Left cardiac atrium (tissue), 4 donors: ENCODE measurements at regions of chr17 and their contacts with region 1.

Region 1: GRCh38 chr17:63370696-63371095 is 75.4 kb downstream of the CYB561 start:
- DNase-seq: no peak
- ATAC-seq: no peak

Region 2: DNA sequence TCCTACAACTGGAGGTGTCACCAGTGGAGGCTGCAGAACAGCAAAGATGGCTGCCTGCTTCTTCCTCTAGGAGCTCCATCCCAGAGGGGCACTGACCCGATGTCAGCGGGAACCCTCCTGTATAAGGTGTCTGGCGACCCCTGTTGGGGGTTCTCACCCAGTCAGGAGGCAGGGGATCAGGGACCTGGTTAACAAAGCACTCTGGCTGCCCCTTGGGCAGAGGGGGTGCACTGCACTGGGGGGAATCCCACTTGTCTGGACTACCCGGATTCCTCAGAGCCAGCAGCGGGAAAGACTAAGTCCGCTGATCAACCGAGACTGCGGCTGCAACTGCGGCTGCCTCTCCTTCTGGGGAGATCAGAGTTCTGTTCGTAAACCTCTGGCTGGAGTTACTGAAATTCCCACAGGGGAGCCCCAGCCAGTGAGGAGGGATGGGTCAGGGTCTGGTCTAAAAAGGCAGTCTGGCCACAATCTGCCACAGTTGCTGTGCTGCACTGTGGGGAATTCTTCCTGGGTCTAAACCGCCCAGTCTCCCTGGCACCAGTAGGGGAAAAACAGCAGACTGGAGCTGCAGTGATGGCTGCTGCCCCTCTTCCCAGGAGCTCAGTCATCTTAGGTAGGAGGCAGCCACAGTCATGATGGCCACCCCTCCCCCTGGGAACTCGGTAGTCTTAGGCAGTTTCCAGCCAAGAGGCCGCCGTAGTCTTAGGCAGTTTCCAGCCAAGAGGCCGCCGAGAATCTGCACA is 138.0 kb before region 1 on chr17:
- intact Hi-C with region 1: no loop called
- DNase-seq: no peak
- ATAC-seq: no peak

Region 3: GRCh38 chr17:63358111-63358839 is 12.4 kb before region 1 on chr17:
- intact Hi-C with region 1: loop called in 1 of 2 experiments (anchors 1 kb)
- DNase-seq: no peak
- ATAC-seq: peak in 1 of 2 donors; percentile 30

Region 4: DNA sequence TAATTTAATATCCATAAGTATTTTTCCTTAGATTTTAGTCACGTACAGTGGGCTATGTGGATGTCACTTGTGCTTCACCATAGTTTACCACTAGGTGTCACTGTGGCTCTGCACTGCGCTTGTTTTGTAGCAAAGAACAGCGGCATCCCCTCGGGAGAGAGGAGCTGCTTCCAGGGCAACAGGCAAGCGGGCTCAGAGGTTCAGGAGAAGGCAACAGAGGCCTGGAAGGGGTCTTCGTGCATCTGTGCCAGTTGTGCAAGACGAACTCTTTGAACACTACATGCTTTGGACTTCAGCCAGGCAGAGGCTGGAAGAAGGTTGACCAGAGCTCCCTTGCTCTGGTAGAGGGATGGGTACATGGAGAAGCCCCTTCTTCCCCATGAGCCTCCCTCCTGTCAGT is 54.8 kb after region 1 on chr17:
- intact Hi-C with region 1: no loop called
- DNase-seq: peak; percentile 80
- ATAC-seq: peak; percentile 76 to 83

Region 5: GRCh38 chr17:63478791-63479494 is 108.2 kb after region 1 on chr17:
- intact Hi-C with region 1: no loop called
- DNase-seq: peak; percentile 83
- ATAC-seq: peak; percentile 70 to 84